ENCODE measurements at regions of chr1 and their contacts with region 1.

Region 1: DNA sequence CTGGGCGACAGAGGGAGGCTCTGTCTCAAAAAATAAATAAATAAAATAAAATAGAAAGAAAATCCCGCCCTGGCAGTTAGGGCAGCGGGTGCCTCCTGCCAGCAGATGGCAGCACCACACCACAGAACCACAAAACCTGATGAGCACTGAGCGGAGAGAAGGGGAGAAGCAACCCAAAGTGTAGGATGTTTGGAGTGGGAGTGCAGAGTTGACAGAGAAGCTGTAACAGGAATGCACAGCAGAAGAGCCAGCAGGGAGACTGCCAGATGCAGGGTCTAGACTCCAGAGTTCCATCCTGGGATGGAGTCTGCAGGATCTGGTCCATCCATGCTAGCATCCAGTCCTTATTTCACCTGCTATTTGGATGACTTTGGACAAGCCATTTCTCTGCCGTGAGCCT is 29.7 kb upstream of the KIRREL1 start:
- DNase-seq: peak; percentile 80
- ATAC-seq: peak; percentile 67
- H3K4me3 Mint-ChIP-seq: no peak overlapping the region
- H3K27ac Mint-ChIP-seq: no peak overlapping the region
- H3K4me1 Mint-ChIP-seq: peaks cover 5% of the 10 kb centered on the region
- H3K27me3 Mint-ChIP-seq: peaks cover 12% of the 10 kb centered on the region

Region 2: DNA sequence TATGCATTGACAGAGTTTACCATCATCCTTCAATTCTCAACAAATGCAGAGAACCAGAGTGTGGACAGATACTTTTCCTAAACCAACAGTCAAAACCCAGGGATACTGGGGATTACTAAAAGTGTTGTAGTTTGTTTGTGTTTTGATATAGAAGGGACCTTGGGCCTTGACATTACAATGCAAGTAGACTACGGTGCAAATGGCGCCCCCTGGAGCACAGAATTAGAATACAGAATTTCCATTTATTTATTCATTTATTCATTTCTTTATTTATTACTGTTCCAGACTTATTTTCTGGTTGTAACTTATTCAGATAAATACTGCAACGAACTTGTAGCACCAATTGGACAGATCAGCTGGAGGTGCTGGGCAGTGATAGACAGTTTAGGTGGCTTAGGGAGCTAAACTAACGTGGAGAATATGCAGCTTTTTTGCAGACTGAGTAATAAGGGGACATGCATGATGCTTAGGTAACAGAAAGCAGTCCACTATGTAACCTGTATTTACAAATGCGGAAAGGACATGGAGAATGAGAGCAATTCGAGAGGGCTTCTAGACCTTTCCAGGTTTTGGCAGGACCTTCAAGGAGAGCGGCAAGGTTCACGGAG is 72.4 kb after region 1 on chr1:
- CTCF ChIA-PET with region 1: no interaction called
- POLR2A ChIA-PET with region 1: no interaction called
- intact Hi-C with region 1: loop called (anchors 2 to 10 kb)
- DNase-seq: peak; percentile 44
- ATAC-seq: no peak
- H3K4me3 Mint-ChIP-seq: no peak overlapping the region
- H3K27ac Mint-ChIP-seq: no peak overlapping the region
- H3K4me1 Mint-ChIP-seq: no peaks in the 10 kb centered on the region
- H3K27me3 Mint-ChIP-seq: peaks cover 2% of the 10 kb centered on the region

Region 3: DNA sequence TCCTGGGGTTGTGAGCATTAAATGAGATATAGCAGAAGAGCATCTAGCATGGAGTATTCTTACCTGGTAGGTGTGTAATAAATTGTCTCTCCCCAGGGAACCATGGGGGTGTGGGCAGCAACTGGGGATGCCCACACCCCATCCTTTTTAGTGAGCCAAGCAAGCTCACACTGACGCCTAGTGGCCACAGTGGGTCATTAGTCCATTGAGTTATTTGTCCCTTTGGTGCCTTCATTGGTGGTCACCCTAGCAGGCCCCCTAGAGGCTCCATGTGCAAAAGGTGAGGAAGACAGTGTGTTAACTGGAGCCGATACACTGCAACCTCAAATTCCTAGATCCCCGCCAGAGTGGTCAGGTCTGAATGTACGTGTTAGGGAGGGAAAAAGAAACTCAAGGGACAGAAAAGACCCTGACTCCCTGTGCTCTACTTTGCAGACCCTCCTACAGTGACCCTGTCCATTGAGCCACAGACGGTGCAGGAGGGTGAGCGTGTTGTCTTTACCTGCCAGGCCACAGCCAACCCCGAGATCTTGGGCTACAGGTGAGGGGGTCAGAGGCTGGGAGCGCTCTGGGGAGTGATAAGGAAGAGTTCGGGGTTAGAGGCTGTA is 123.7 kb after region 1 on chr1:
- CTCF ChIA-PET with region 1: no interaction called
- POLR2A ChIA-PET with region 1: no interaction called
- intact Hi-C with region 1: loop called in 1 of 2 experiments (anchors 1 kb)
- DNase-seq: peak; percentile 55
- ATAC-seq: peak; percentile 61
- H3K4me3 Mint-ChIP-seq: no peak overlapping the region
- H3K27ac Mint-ChIP-seq: no peak overlapping the region
- H3K4me1 Mint-ChIP-seq: no peaks in the 10 kb centered on the region
- H3K27me3 Mint-ChIP-seq: no peaks in the 10 kb centered on the region

Region 4: GRCh38 chr1:158117854-158118704 is 154.4 kb after region 1 on chr1:
- CTCF ChIA-PET with region 1: interaction called, 23 read pairs
- POLR2A ChIA-PET with region 1: no interaction called
- intact Hi-C with region 1: loop called in 1 of 2 experiments (anchors 1 kb)
- DNase-seq: peak; percentile 71
- ATAC-seq: peak; percentile 84
- H3K4me3 Mint-ChIP-seq: peak overlapping the region; percentile 42
- H3K27ac Mint-ChIP-seq: no peak overlapping the region
- H3K4me1 Mint-ChIP-seq: peaks cover 10% of the 10 kb centered on the region
- H3K27me3 Mint-ChIP-seq: peaks cover 41% of the 10 kb centered on the region

Region 5: GRCh38 chr1:158124999-158125398 is 161.3 kb after region 1 on chr1:
- CTCF ChIA-PET with region 1: interaction called, 20 read pairs
- POLR2A ChIA-PET with region 1: no interaction called
- intact Hi-C with region 1: loop called (anchors 1 to 2 kb)
- DNase-seq: peak; percentile 82
- ATAC-seq: peak; percentile 95
- H3K4me3 Mint-ChIP-seq: no peak overlapping the region
- H3K27ac Mint-ChIP-seq: no peak overlapping the region
- H3K4me1 Mint-ChIP-seq: no peaks in the 10 kb centered on the region
- H3K27me3 Mint-ChIP-seq: peaks cover 16% of the 10 kb centered on the region

Measured in activated CD4-positive, alpha-beta T cell treated with anti-CD3 and anti-CD28 coated beads for 36 hours (primary cell).